HEK293 (cell line): ENCODE measurements at regions of chr1 and their contacts with region 1.

Region 1: GRCh38 chr1:203273206-203273868 is 32.0 kb upstream of the BTG2 start:
- H3K4me3 ChIP-seq: no peak overlapping the region
- H3K27ac ChIP-seq: no peak overlapping the region
- H3K4me1 ChIP-seq: peaks cover 2% of the 10 kb centered on the region; the same call in 1 of the 2 replicates
- CTCF ChIP-seq: peak; percentile 95

Region 2: DNA sequence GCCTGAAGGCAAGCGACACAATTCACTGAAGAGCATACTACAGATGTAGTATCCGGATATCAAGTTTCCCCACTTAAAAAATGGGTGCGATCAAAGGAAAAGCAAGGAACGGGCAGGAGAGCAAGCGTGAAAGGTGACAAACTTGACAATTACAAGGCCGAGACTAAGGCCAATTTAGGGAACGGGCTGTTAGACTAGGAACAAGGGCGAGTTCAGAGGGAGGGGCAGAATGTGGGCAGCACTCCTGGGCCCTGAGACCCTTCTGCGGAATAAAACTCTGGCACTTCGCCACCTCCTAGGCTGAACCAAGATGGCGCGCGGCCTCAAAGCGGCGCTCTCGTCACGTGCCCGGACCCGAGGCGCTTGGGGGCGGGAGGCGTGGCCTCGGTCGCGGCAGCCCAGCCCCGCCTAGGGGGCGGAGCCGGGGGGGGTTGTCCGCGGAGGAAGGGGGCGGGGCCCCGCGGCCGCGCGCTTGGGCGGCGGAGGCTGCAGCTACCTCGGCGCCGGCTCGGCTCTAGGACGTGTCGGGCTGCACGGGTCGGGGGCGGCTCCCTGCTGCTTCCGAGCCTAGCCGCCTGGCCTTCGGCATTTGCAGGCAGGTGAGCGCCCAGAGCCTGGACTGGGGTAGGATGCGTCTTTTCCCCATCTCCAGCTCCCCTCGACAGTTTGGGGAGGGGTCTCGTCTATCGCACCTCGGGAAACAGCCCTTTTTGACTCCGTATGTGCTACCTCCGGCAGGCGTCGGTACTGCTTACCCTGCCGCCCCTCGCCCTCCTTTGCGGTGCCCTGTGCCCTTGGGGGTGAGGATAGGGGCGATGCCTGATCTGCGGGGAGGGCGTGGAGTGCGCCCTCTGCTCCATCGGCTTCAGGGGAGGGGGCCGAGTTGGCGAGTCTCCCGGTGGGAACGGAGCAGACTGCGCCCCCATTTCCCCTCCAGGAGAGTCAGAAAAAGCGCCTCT is 247.0 kb before region 1 on chr1 and contains the start of gene PPFIA4:
- CTCF ChIA-PET with region 1: interaction called, 526 read pairs
- POLR2A ChIA-PET with region 1: interaction called, 3 read pairs
- H3K4me3 ChIP-seq: peak within 1 kb of the TSS; percentile 56
- H3K27ac ChIP-seq: no peak within 1 kb of the TSS; the same call in 1 of the 2 replicates
- H3K4me1 ChIP-seq: no peaks in the 10 kb centered on the region
- CTCF ChIP-seq: peak; percentile 41; the same call in 1 of the 2 replicates

Region 3: GRCh38 chr1:203290261-203291089 is 17.1 kb after region 1 on chr1:
- CTCF ChIA-PET with region 1: interaction called, 20 read pairs
- POLR2A ChIA-PET with region 1: no interaction called
- H3K4me3 ChIP-seq: no peak overlapping the region
- H3K27ac ChIP-seq: peak overlapping the region; percentile 20; the same call in 1 of the 2 replicates
- H3K4me1 ChIP-seq: peaks cover 11% of the 10 kb centered on the region
- CTCF ChIP-seq: no peak

Region 4: DNA sequence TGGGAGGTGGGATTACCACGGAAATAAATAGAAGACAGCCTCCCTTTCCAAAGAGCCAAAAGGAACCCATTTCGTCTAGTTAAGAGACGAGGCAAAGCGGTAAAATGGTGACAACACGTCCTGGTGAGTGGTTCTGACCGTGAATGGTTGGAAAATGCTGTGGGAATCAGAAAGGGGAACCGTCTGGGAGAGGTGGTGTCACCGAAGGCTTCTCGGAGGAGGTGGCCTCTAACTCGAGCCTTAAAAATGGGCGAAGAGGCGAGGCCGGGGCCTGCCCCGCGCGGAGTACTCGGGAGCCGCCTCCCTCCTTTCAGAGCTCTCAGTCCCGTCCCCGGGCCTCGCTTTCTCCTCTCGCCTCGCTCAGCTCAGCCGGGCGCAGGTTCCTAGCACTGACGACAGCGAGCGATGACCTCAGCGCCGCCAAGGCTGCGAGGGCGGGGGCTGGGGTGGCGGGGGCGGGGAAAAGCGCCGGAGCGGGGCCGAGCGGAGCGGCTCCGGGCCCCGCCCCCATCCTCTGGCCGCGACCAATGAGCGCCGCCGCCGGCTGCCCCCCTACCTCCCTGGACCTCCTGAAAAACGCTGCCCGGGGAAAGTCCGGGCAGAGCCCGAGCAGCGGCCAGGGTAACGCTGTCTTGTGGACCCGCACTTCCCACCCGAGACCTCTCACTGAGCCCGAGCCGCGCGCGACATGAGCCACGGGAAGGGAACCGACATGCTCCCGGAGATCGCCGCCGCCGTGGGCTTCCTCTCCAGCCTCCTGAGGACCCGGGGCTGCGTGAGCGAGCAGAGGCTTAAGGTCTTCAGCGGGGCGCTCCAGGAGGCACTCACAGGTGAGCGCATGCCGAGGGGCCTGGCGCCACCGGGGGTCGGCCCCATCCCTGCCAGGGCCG is 31.8 kb after region 1 on chr1 and contains the start of gene BTG2:
- CTCF ChIA-PET with region 1: interaction called, 75 read pairs
- POLR2A ChIA-PET with region 1: interaction called, 32 read pairs
- H3K4me3 ChIP-seq: peak within 1 kb of the TSS; percentile 91
- H3K27ac ChIP-seq: peak within 1 kb of the TSS; percentile 95
- H3K4me1 ChIP-seq: peaks cover 16% of the 10 kb centered on the region; the same call in 1 of the 2 replicates
- CTCF ChIP-seq: peak; percentile 28; the same call in 1 of the 2 replicates

Region 5: GRCh38 chr1:203326830-203327683 is 53.7 kb after region 1 on chr1:
- CTCF ChIA-PET with region 1: interaction called, 371 read pairs
- POLR2A ChIA-PET with region 1: interaction called, 4 read pairs
- H3K4me3 ChIP-seq: peak overlapping the region; percentile 38
- H3K27ac ChIP-seq: peak overlapping the region; percentile 88
- H3K4me1 ChIP-seq: peaks cover 38% of the 10 kb centered on the region
- CTCF ChIP-seq: no peak

Region 6: DNA sequence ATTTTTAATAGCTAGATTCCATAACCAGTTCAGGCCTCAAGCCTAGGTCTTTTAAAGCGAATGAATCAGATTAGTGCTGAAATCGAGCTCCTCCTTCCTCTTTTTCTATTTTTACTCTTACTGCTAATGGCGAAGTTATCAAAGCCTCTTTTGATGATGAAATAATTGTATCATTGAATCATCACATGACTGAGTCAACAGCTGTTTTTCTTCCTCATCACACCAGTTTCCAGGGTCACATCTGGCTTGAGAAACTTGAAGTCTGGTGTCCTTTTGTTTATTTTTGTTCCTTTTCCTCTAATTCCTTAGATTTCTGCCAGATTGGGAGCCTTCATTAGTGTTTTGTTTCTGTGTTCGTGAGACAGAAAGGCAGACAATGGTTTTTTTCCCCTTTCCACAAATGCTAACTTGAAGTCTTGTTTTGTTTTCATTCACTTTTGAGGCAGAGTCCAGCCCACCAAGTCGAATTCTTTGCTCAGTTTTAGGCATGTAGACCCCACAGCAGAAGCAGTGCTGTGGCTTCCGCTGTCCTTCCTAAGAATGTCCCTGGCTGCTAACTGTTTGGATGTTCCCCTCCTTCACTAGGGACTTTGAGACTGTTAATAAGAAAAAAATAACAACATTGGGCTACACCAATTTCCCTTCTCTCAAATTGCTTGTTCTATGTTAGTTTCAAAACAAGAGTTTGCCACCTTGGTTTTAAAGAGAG is 129.4 kb after region 1 on chr1:
- CTCF ChIA-PET with region 1: no interaction called
- POLR2A ChIA-PET with region 1: no interaction called
- H3K4me3 ChIP-seq: no peak overlapping the region
- H3K27ac ChIP-seq: no peak overlapping the region
- H3K4me1 ChIP-seq: no peaks in the 10 kb centered on the region
- CTCF ChIP-seq: no peak

Region 7: GRCh38 chr1:203440771-203441170 is 167.4 kb after region 1 on chr1:
- CTCF ChIA-PET with region 1: interaction called, 12 read pairs
- POLR2A ChIA-PET with region 1: no interaction called
- H3K4me3 ChIP-seq: no peak overlapping the region
- H3K27ac ChIP-seq: no peak overlapping the region
- H3K4me1 ChIP-seq: no peaks in the 10 kb centered on the region
- CTCF ChIP-seq: peak; percentile 80

Region 8: DNA sequence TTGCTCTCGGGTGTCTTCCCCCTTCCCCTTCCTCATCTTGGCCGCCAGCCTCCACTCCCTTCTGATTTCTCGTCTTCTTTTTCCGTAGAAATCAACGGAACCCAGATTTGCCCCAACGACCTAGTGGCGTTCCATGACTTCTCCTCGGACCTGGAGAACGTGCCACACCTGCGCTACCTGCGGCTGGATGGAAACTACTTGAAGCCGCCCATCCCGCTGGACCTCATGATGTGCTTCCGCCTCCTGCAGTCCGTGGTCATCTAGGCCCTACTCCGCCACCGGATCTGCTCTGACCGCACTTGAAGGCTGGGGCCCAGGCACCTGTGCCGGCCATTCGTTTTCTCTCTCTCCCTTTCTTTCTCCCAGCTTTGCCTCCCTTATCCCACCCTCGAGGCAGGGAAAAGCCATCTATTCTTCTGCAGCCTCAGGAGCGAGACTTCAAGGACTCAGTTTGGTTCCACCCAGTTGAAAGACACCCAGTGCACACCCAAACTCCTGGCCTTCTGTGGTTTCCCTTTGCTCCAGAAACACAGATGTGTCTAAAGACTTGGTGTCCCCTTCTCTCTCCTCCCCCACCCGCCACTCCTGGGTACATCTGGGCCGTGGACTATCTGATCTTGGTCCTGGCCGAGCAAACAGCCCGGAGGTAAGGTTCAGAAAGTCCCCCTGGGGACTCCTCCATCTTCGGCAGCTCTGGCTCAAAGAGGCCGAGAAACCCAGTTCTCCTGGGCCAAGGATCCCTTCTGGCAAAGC is 213.5 kb after region 1 on chr1:
- CTCF ChIA-PET with region 1: interaction called, 25 read pairs
- POLR2A ChIA-PET with region 1: no interaction called
- H3K4me3 ChIP-seq: no peak overlapping the region
- H3K27ac ChIP-seq: peak overlapping the region; percentile 10; the same call in 1 of the 2 replicates
- H3K4me1 ChIP-seq: no peaks in the 10 kb centered on the region
- CTCF ChIP-seq: no peak